CD4-positive, alpha-beta T cell (primary cell): ENCODE measurements at regions of chr16 and their contacts with region 1.

Region 1: DNA sequence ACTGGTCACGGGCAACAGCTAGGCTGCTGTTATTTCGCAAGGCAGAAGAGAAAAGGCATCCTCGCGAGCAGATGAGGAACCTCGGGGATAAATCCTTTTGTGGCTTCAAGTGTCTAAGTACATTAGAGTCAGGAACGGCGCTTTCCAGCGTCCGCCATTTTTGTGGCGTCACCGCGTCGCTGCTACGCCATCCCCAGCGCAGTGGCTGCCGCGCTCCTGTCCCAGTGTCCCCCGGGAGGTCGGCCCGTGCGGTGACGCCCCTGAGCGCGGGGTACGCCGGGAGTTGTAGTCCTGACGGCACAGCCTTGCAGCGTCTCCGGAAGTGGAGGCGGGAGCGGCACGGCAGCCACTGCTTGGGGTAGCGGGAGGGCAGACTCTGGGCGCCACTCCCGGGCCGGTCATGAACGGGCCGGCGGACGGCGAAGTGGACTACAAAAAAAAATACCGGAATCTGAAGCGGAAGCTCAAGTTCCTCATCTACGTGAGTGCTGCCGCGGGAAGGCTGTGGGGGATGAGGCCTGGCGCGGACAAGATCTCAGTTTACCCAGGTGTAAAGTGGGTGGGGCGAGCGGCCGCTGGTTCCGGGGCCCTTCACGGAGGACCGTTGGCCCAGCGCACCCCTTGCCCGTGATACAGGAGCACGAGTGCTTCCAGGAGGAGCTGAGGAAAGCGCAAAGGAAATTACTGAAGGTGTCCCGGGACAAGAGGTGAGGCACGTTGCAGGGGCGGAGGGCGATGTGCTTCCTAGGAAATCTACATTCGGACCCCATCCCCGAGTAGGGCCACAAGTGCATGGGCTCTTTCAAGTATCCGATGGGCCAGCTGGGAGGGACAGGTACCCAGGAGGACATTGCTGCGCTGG is at the start of gene INO80E:
- DNase-seq: peak; percentile 97 to 100 (median 99)
- ATAC-seq: peak; percentile 95
- H3K4me3 ChIP-seq: peak within 1 kb of the TSS; percentile 83
- H3K4me3 Mint-ChIP-seq: peak within 1 kb of the TSS; percentile 98
- H3K27ac ChIP-seq: peak within 1 kb of the TSS; percentile 98
- H3K27ac Mint-ChIP-seq: peak within 1 kb of the TSS; percentile 99
- H3K4me1 ChIP-seq: peaks cover 30% of the 10 kb centered on the region
- H3K4me1 Mint-ChIP-seq: peaks cover 33% of the 10 kb centered on the region
- H3K27me3 ChIP-seq: no peaks in the 10 kb centered on the region
- H3K27me3 Mint-ChIP-seq: no peaks in the 10 kb centered on the region
- CTCF ChIP-seq: no peak
- total RNA-seq, gene INO80E: 54.6 to 57.6 TPM

Region 2: GRCh38 chr16:29815793-29816693 is 180.1 kb before region 1 on chr16 and contains the start of gene PAGR1:
- CTCF ChIA-PET with region 1: no interaction called
- POLR2A ChIA-PET with region 1: no interaction called
- intact Hi-C with region 1: loop called in 1 of 2 experiments (anchors 2 kb)
- DNase-seq: peak; percentile 97 to 100 (median 98)
- ATAC-seq: peak; percentile 73
- H3K4me3 ChIP-seq: peak within 1 kb of the TSS; percentile 95
- H3K4me3 Mint-ChIP-seq: peak within 1 kb of the TSS; percentile 97
- H3K27ac ChIP-seq: peak within 1 kb of the TSS; percentile 84 to 94
- H3K27ac Mint-ChIP-seq: peak within 1 kb of the TSS; percentile 90
- H3K4me1 ChIP-seq: peaks cover 92% of the 10 kb centered on the region
- H3K4me1 Mint-ChIP-seq: peaks cover 83% of the 10 kb centered on the region
- H3K27me3 ChIP-seq: no peaks in the 10 kb centered on the region
- H3K27me3 Mint-ChIP-seq: no peaks in the 10 kb centered on the region
- CTCF ChIP-seq: peak; percentile 97
- total RNA-seq, gene PAGR1: 20.3 TPM

Region 3: GRCh38 chr16:29900102-29900887 is 95.8 kb before region 1 on chr16 and contains the start of gene ASPHD1:
- CTCF ChIA-PET with region 1: no interaction called
- POLR2A ChIA-PET with region 1: interaction called, 4 read pairs
- intact Hi-C with region 1: loop called in 1 of 2 experiments (anchors 5 kb)
- DNase-seq: peak in 11 of 14 experiments; percentile 47 to 88 (median 70)
- ATAC-seq: peak; percentile 89
- H3K4me3 ChIP-seq: peak within 1 kb of the TSS; percentile 55
- H3K4me3 Mint-ChIP-seq: peak within 1 kb of the TSS; percentile 74
- H3K27ac ChIP-seq: no peak within 1 kb of the TSS
- H3K27ac Mint-ChIP-seq: no peak within 1 kb of the TSS
- H3K4me1 ChIP-seq: peaks cover 22% of the 10 kb centered on the region
- H3K4me1 Mint-ChIP-seq: peaks cover 4% of the 10 kb centered on the region
- H3K27me3 ChIP-seq: peaks cover 28 to 29% of the 10 kb centered on the region in 2 experiments
- H3K27me3 Mint-ChIP-seq: peaks cover 31% of the 10 kb centered on the region
- CTCF ChIP-seq: no peak
- total RNA-seq, gene ASPHD1: not detected

Region 4: DNA sequence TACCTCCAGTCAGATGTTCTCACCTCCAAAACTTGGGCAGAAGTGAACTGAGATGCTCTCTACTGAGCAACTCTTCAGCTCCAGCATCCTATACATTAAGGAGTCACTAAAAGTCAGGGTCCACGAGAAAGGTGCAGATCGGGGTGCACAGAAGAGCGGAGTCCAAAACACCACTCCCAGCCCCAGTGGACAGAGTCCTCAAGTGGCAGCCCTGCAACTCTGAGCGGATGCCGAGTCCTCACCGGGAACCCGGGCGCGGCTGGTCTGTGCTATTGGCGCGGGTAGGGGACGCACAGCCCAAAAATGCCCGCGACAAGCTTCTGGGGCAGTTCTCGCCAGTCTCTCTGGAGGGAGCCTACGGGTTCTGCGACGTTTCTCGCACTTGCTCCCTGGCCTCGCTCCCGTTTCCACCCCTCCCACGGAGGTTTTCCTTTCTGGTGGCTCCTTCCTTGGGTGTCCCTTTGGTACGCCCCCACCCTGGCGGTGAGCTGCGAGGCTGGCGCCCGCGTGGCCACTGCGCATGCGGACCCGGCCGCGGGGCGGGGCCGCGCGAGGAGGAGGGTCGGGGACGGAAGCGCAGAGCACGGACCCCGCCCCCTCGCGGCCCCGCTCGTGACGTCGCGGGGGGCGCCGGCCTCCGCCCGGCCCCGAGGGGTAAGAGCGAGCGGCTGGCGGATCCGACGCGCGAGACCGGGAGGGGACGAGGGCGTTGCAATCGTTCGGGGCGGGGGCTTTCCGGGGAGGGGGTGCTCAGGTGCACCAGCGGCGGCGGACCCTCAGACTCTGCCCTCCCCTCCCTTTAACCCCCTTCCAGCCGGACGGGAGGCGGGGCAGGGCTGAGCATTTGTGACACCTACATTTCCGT is 34.4 kb before region 1 on chr16 and contains the start of gene TMEM219:
- CTCF ChIA-PET with region 1: no interaction called
- POLR2A ChIA-PET with region 1: interaction called, 11 read pairs
- intact Hi-C with region 1: loop called in 1 of 2 experiments (anchors 1 kb)
- DNase-seq: peak; percentile 87 to 97 (median 94)
- ATAC-seq: peak; percentile 83
- H3K4me3 ChIP-seq: peak within 1 kb of the TSS; percentile 88
- H3K4me3 Mint-ChIP-seq: peak within 1 kb of the TSS; percentile 93
- H3K27ac ChIP-seq: peak within 1 kb of the TSS; percentile 77 to 92
- H3K27ac Mint-ChIP-seq: peak within 1 kb of the TSS; percentile 91
- H3K4me1 ChIP-seq: peaks cover 23% of the 10 kb centered on the region
- H3K4me1 Mint-ChIP-seq: peaks cover 31% of the 10 kb centered on the region
- H3K27me3 ChIP-seq: no peaks in the 10 kb centered on the region
- H3K27me3 Mint-ChIP-seq: no peaks in the 10 kb centered on the region
- CTCF ChIP-seq: peak; percentile 32
- total RNA-seq, gene TMEM219: 56.9 to 63.3 TPM

Region 5: DNA sequence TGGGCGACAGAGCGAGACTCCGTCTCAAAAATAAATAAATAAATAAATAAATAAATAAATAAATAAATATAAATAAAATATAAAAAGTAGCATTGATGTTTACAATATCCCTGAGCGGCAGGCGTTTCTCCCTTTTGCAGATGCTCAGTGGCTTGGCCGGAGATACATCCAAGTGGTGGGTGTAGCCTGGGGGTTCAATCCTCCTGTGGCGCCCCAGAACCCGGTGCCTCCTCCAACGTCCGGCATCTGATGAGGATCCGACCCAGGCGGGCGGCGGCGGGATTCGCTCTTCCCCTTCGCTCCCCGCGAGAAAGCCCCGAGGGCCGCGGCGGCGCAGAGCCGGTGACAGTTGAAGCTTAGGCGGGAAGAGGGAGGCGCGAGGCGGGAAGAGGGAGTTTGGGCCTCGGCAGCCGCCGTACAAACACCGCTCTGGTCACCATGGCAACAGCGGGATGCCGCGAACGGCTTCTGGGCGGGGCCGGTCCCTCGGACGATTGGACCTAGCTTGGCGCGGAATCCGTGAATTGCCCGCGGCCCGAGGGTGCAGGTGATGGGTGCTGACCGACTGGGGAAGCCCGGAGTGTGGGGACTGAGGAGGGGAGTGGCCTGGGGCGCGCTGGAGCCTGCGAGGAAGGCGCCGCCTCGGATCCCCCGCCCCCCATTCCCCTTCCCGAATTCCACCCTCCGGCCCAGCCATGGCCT is 56.7 kb after region 1 on chr16:
- CTCF ChIA-PET with region 1: no interaction called
- POLR2A ChIA-PET with region 1: no interaction called
- intact Hi-C with region 1: loop called in 1 of 2 experiments (anchors 5 kb)
- DNase-seq: peak; percentile 78 to 93 (median 86)
- ATAC-seq: peak; percentile 70
- H3K4me3 ChIP-seq: peak overlapping the region; percentile 86
- H3K4me3 Mint-ChIP-seq: peak overlapping the region; percentile 88
- H3K27ac ChIP-seq: no peak overlapping the region
- H3K27ac Mint-ChIP-seq: peak overlapping the region; percentile 64
- H3K4me1 ChIP-seq: peaks cover 24% of the 10 kb centered on the region
- H3K4me1 Mint-ChIP-seq: peaks cover 22% of the 10 kb centered on the region
- H3K27me3 ChIP-seq: no peaks in the 10 kb centered on the region
- H3K27me3 Mint-ChIP-seq: no peaks in the 10 kb centered on the region
- CTCF ChIP-seq: no peak